A673 (cell line): ENCODE measurements at regions of chr7 and their contacts with region 1.

Region 1: DNA sequence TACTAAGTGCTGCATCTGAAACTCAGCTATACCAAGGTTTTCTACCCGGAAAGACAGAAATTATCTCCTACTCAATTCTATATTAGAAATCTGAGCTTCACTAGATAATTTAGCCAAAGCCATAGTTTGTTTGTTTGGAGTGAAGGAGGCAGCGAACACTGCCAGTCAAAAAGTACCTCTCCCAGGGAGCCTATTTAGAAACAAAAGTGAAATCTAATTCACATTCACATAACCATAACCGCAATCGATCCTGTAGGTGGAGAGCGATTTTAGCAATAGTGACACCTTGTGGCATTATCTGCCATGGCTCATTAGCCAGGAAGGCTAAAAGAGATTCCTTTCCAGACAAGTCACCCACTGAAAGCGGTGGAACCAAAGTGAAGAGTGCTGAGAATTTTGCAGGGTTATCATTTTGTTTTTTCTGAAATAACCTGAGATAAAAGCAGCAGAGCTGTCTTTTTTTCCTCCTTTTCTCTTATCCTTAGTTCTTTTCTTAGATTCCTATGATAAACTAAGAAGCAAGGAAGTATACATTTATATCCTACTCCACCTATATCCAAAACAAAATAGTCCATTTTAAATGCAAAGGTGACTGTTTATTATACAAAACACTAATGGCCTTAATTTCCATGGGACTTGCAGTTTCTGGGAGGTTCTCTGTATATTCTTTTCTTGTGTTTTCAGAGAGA is 83.7 kb upstream of the BET1 start:
- DNase-seq: peak; percentile 74
- H3K4me3 ChIP-seq: peak overlapping the region; percentile 20
- H3K27ac ChIP-seq: no peak overlapping the region
- H3K4me1 ChIP-seq: peaks cover 17% of the 10 kb centered on the region
- H3K27me3 ChIP-seq: no peaks in the 10 kb centered on the region
- CTCF ChIP-seq: peak; percentile 86

Region 2: DNA sequence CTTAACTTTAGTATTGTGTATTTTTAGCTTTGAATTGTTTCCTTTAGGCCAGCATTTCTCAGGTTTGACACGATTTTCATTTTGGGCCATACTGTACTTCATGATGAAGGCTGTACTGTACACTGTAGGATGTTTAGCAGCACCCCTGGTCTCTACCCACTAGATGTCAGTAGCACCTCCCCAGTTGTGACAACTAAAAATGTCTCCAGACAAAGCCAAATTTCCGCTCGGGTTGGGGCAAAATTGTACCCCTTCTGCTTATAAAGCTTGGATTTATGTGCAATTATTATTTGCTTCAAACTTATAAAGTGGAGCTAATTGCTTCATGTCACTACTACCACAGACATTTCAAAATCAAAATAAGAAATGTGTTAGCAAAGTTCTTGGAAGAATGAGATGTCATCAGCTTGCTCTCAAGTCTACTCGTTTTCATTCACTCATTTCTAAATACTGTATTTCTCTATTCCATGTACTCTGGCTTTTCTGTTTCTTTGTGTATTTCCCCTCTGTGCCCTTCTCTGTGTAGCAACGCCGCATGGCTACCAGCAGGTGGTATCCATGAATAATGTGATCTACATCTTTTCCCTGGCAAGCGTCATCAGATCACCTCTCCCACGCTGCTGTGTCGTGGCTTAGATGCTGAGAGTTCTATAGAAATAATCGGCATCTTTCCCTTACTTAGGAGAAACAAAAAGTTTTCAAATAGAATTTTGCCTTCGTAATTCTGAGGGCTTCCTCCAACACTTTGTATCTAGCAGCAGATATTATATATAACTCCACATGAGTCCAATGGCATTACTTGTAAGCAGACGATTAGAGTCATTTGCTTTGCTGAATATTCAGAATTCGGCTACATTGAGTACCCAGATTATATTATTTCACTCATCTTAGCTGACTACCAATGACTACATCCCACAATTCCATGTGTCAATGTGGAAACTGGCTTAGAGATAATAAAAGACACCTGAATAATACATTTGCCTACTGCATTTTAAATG is 465.5 kb before region 1 on chr7:
- CTCF ChIA-PET with region 1: interaction called, 3 read pairs
- POLR2A ChIA-PET with region 1: no interaction called
- intact Hi-C with region 1: loop called (anchors 5 kb)
- DNase-seq: peak; percentile 71
- H3K4me3 ChIP-seq: peak overlapping the region; percentile 30
- H3K27ac ChIP-seq: no peak overlapping the region
- H3K4me1 ChIP-seq: no peaks in the 10 kb centered on the region
- H3K27me3 ChIP-seq: no peaks in the 10 kb centered on the region
- CTCF ChIP-seq: peak; percentile 65

Region 3: GRCh38 chr7:93715234-93715633 is 372.6 kb before region 1 on chr7:
- CTCF ChIA-PET with region 1: no interaction called
- POLR2A ChIA-PET with region 1: no interaction called
- intact Hi-C with region 1: loop called (anchors 5 kb)
- DNase-seq: peak; percentile 68
- H3K4me3 ChIP-seq: no peak overlapping the region
- H3K27ac ChIP-seq: no peak overlapping the region
- H3K4me1 ChIP-seq: no peaks in the 10 kb centered on the region
- H3K27me3 ChIP-seq: peaks cover 5% of the 10 kb centered on the region
- CTCF ChIP-seq: peak; percentile 77

Region 4: GRCh38 chr7:93799750-93800357 is 288.0 kb before region 1 on chr7:
- CTCF ChIA-PET with region 1: no interaction called
- POLR2A ChIA-PET with region 1: no interaction called
- intact Hi-C with region 1: loop called (anchors 10 kb)
- DNase-seq: peak; percentile 28
- H3K4me3 ChIP-seq: no peak overlapping the region
- H3K27ac ChIP-seq: no peak overlapping the region
- H3K4me1 ChIP-seq: no peaks in the 10 kb centered on the region
- H3K27me3 ChIP-seq: no peaks in the 10 kb centered on the region
- CTCF ChIP-seq: peak; percentile 67

Region 5: GRCh38 chr7:93902777-93903423 is 184.9 kb before region 1 on chr7:
- CTCF ChIA-PET with region 1: no interaction called
- POLR2A ChIA-PET with region 1: no interaction called
- intact Hi-C with region 1: loop called (anchors 1 kb)
- DNase-seq: peak; percentile 82
- H3K4me3 ChIP-seq: no peak overlapping the region
- H3K27ac ChIP-seq: no peak overlapping the region
- H3K4me1 ChIP-seq: peaks cover 2% of the 10 kb centered on the region
- H3K27me3 ChIP-seq: no peaks in the 10 kb centered on the region
- CTCF ChIP-seq: peak; percentile 89

Region 6: GRCh38 chr7:94205529-94205928 is 117.7 kb after region 1 on chr7:
- CTCF ChIA-PET with region 1: no interaction called
- POLR2A ChIA-PET with region 1: no interaction called
- intact Hi-C with region 1: no loop called
- DNase-seq: no peak
- H3K4me3 ChIP-seq: no peak overlapping the region
- H3K27ac ChIP-seq: no peak overlapping the region
- H3K4me1 ChIP-seq: peaks cover 10% of the 10 kb centered on the region
- H3K27me3 ChIP-seq: no peaks in the 10 kb centered on the region
- CTCF ChIP-seq: no peak

Region 7: GRCh38 chr7:94276795-94277194 is 189.0 kb after region 1 on chr7:
- CTCF ChIA-PET with region 1: no interaction called
- POLR2A ChIA-PET with region 1: no interaction called
- intact Hi-C with region 1: loop called (anchors 5 kb)
- DNase-seq: peak; percentile 73
- H3K4me3 ChIP-seq: no peak overlapping the region
- H3K27ac ChIP-seq: no peak overlapping the region
- H3K4me1 ChIP-seq: peaks cover 9% of the 10 kb centered on the region
- H3K27me3 ChIP-seq: no peaks in the 10 kb centered on the region
- CTCF ChIP-seq: peak; percentile 67